Right cardiac atrium (tissue), 5 donors: ENCODE measurements at regions of chr19 and their contacts with region 1.

Region 1: DNA sequence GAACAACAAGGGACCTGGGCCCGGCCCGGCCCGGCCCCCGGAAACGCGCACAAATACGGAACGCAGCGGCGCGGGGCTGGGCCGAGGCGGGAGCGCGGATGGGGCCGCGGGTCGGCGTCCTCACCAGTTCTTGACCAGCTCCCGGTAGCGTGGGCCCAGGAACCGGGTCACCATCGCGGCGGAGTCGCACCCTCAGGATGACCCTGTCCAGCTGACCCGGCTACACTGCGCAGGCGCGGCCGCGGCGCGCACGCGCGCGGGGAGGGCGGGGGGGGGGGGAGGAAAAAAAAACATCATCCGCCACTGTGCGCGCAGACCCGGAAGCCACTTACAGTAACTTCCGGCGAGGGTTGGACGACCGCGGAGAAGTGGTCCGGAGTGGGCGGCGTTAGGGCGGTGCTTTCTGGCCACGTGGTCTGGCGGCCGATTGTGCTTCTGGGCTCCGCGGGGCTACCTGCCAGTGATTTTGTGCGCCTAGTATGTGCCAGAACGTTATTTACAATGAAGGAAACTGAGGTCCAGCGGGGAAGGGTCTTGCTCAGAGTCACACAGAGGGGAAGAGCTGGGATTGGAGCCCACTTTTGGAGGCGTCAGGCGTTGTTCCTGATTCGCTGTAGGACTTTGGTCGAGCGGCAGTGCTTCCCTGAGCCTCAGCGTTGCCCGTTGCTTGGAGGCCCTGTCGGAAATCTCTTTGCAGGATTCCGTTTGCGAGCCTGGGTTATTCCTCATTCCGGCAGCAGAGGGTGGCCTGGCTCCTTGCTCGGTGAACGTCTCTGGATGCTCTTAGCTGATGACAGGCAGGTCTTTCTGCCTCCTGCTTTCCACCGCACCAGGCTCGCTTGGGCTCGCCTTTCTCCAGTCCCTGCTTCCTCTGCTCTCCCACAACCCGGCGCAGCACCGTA is at the start of gene UQCR11:
- DNase-seq: peak; percentile 96 to 98 (median 98)
- ATAC-seq: peak; percentile 95 to 97
- H3K4me3 ChIP-seq: peak within 1 kb of the TSS; percentile 96
- H3K27ac ChIP-seq: peak within 1 kb of the TSS; percentile 92
- H3K4me1 ChIP-seq: peaks cover 3% of the 10 kb centered on the region
- H3K27me3 ChIP-seq: no peaks in the 10 kb centered on the region
- total RNA-seq, gene UQCR11: 639 to 958 (median 854) TPM

Region 2: DNA sequence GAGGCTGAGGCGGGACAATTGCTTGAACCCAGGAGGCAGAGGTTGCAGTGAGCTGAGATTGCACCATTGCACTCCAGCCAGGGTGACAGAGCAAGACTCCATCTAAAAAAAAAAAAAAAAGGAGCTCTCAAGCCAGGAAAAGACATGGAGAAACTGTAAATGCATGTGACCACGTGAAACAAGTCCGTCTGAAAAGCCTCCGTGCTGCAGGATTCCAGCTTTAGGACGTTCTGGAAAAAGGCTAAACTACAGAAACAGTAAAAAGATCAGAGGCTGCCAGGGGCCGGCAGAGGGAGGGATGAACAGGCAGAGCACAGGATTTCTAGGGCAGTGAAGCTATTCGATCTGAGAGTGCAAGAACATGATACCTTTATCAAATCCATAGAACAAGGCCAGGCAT is 262.4 kb before region 1 on chr19:
- intact Hi-C with region 1: no loop called
- DNase-seq: no peak
- ATAC-seq: no peak
- H3K4me3 ChIP-seq: no peak overlapping the region
- H3K27ac ChIP-seq: no peak overlapping the region
- H3K4me1 ChIP-seq: no peaks in the 10 kb centered on the region
- H3K27me3 ChIP-seq: no peaks in the 10 kb centered on the region

Region 3: DNA sequence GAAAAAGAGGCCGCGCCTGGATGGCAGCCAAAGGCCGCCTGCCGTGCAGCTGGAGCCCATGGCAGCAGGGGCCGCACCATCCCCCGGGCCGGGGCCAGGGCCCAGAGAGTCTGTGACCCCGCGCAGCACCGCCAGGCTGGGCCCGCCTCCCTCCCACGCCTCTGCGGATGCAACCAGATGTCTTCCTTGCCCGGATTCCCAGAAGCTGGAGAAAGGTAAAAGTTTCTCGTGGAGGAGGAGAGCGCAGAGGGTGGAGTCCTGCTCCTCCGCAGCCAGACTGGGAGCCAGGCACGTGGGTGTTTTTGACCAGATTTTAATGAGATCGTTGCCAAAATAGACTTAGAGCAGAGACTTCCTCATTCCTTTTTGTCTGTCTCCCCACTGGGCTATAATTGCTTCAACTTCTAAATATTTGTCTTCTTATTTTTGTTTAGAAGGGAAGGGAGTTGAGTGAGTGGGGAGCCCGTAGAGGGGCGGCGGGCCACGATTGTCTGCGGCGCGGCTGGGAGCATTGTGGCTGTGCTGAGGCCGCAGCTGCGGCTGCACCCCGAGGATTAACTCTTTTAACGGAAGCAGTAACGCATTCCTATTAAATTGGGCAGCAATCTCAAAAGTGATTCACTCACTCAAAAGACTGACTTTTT is 244.5 kb before region 1 on chr19:
- intact Hi-C with region 1: no loop called
- DNase-seq: peak; percentile 80 to 92 (median 91)
- ATAC-seq: peak; percentile 74 to 83
- H3K4me3 ChIP-seq: peak overlapping the region; percentile 25
- H3K27ac ChIP-seq: peak overlapping the region; percentile 23
- H3K4me1 ChIP-seq: peaks cover 6% of the 10 kb centered on the region
- H3K27me3 ChIP-seq: no peaks in the 10 kb centered on the region

Region 4: GRCh38 chr19:1652471-1653299 is 47.2 kb after region 1 on chr19 and contains the start of gene TCF3:
- intact Hi-C with region 1: loop called in 2 of 4 experiments (anchors 5 kb)
- DNase-seq: peak; percentile 98 to 99 (median 99)
- ATAC-seq: peak; percentile 98 to 99
- H3K4me3 ChIP-seq: peak within 1 kb of the TSS; percentile 100
- H3K27ac ChIP-seq: peak within 1 kb of the TSS; percentile 100
- H3K4me1 ChIP-seq: no peaks in the 10 kb centered on the region
- H3K27me3 ChIP-seq: no peaks in the 10 kb centered on the region
- total RNA-seq, gene TCF3: 20.1 to 23.6 (median 22.4) TPM

Region 5: GRCh38 chr19:1774999-1775772 is 169.7 kb after region 1 on chr19:
- intact Hi-C with region 1: no loop called
- DNase-seq: peak in 1 of 3 donors; percentile 51
- ATAC-seq: no peak
- H3K4me3 ChIP-seq: no peak overlapping the region
- H3K27ac ChIP-seq: no peak overlapping the region
- H3K4me1 ChIP-seq: no peaks in the 10 kb centered on the region
- H3K27me3 ChIP-seq: no peaks in the 10 kb centered on the region